ENCODE measurements at regions of chr16 and their contacts with region 1.

Region 1: GRCh38 chr16:78227855-78228254 is 128.4 kb downstream of the WWOX start:
- DNase-seq: no peak
- ATAC-seq: no peak
- H3K4me3 ChIP-seq: no peak overlapping the region
- H3K27ac ChIP-seq: no peak overlapping the region
- H3K4me1 ChIP-seq: no peaks in the 10 kb centered on the region
- H3K27me3 ChIP-seq: no peaks in the 10 kb centered on the region
- CTCF ChIP-seq: peak in 3 of 5 experiments; percentile 9 to 33 (median 27)
- POLR2A ChIP-seq: no peak

Region 2: DNA sequence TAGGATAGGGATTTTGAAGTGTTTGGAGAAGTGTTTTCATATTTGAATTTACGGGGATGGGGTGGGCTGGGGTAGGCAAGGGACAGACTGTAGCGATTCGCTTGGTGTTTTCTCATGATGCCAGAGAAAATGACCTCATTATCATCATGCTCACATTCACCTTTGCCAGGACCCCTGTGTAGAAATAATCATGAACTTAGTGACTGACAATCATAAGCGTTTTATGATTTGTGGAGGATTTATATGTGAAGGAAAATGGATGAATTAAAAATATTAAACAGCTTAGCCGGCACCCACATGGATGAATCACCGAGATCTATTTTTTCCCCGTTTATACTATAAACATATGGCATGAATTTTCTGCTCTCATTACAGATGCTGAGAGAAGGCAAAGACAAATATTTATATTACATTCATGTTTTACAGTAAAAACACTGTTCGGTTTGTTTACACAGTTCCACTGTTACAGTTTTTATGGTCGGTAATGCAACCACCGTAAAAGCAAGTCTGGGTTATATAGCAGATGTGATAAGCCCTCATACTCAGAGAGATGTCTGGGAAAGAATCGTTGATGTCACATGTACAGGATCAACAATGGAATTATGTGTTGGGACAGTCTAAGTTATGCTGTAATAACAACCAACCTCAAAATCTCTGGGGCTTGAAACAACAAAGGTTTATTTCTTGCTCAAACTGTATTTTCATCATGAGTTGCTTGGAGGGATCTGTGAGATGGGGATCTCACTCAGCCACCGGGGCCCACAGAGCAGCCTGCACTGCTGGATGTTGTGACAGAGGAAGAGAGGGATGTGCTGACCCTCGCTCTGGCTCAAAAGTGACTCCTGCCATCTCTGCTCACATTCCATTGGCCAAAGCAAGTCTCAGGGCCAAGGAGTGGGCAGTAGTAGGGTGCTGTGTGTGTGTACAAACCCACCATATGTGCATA is 43.3 kb before region 1 on chr16:
- in situ Hi-C with region 1: no loop called
- intact Hi-C with region 1: no loop called
- DNase-seq: no peak
- ATAC-seq: no peak
- H3K4me3 ChIP-seq: no peak overlapping the region
- H3K27ac ChIP-seq: no peak overlapping the region
- H3K4me1 ChIP-seq: no peaks in the 10 kb centered on the region
- H3K27me3 ChIP-seq: no peaks in the 10 kb centered on the region
- CTCF ChIP-seq: no peak
- POLR2A ChIP-seq: no peak

Region 3: DNA sequence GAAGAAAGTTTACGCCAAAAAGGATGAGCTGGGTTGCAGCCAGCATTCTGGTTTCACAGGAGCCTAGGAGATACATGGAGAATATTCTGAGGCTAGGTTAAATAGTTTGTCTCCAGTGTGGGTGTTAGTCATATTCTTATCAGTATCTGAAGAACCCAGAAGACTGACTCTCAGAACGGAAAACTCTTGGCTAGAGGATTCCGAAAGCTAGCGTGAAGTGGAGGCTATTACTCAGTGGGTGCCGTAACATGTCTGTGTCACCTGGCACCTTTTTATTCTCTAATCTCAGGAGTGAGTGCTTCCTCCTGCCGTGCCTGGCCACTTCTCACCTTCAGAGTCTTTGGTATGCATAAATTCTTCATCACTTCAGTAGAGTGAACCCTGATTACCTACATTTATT is 71.1 kb after region 1 on chr16:
- in situ Hi-C with region 1: no loop called
- intact Hi-C with region 1: loop called (anchors 2 kb)
- DNase-seq: no peak
- ATAC-seq: no peak
- H3K4me3 ChIP-seq: no peak overlapping the region
- H3K27ac ChIP-seq: no peak overlapping the region
- H3K4me1 ChIP-seq: no peaks in the 10 kb centered on the region
- H3K27me3 ChIP-seq: no peaks in the 10 kb centered on the region
- CTCF ChIP-seq: no peak
- POLR2A ChIP-seq: no peak

Region 4: DNA sequence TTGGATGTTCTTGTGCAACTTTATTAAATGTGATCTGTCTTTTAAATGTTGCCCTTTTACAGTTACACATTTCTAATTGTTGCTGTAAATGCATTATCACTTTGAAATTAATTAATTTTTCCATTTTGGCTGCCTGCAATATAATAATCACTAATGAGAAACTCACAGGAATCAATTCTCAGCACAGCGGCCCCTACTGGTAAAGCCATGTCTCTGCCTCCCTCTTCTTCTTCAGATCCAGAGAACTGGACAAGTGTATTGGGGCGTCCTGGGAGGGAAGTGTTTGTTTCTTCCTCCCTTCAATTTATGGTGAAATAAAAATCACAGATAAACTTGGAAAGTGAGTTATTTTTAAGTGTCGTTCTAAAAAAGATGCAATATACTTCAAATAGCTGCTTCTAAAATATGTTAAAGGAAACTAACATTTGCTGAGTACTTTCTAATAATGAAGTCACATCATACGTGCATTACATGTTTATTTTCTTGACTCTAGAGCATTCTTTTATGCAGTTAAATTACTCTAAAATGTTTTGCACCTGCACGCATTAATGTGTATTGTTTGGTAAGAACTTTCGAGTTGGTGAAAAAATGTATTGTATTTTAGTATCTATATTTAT is 209.6 kb after region 1 on chr16:
- in situ Hi-C with region 1: no loop called
- intact Hi-C with region 1: loop called (anchors 5 kb)
- DNase-seq: peak in 1 of 2 donors; percentile 6
- ATAC-seq: no peak
- H3K4me3 ChIP-seq: no peak overlapping the region
- H3K27ac ChIP-seq: no peak overlapping the region
- H3K4me1 ChIP-seq: no peaks in the 10 kb centered on the region
- H3K27me3 ChIP-seq: no peaks in the 10 kb centered on the region
- CTCF ChIP-seq: peak; percentile 37 to 74 (median 46)
- POLR2A ChIP-seq: no peak

Measured in gastrocnemius medialis (tissue), 4 donors.